CD8-positive, alpha-beta T cell (primary cell): ENCODE measurements at regions of chr1 and their contacts with region 1.

Region 1: DNA sequence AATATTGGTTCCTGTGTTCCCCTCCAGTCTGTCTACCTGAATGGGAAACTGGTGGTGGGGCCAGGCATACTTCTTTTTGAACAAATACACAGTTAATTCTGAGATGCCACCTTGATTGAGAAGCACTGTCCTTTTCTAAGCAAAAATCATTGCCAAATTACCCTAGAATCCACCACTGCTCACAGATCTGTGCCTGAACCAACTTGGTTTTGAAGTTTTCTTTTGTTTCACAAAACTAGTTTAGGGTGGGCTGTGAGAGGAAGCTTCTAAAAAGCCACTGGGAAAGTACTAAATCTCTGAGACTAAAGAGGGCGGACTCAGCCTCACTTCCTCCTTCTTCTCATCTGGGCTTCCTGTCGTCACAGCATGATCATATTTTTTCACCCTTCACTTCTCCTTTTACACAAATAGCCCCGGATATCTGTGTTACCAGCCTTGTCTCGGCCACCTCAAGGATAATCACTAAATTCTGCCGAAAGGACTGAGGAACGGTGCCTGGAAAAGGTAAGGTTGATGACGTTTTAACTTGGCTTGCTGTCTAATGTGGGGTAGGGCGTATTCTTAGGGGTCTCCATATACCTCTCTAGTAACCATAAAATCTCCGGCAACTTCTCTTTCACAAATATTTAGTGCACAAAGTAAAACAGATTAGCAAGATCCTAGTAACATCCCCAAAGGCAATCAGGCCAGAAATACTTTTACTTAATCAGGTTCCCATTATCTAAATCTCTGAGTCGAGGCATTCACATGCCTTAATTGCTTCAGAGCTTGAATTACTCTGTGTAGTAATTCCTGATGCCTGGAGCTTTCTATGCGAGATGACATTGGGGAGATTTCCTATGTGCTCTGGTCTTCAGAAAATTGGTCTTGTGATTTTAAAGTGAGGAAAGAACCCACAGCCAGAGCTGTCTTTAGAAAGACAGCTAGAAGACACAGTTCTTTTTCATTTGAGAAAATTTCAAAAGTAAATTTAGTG is at the start of gene CD53:
- DNase-seq: peak in 8 of 9 experiments; percentile 39 to 92 (median 66)
- ATAC-seq: peak; percentile 70
- H3K4me3 ChIP-seq: peak within 1 kb of the TSS; percentile 83 to 86
- H3K4me3 Mint-ChIP-seq: peak within 1 kb of the TSS; percentile 96
- H3K27ac ChIP-seq: peak within 1 kb of the TSS; percentile 95 to 96
- H3K27ac Mint-ChIP-seq: peak within 1 kb of the TSS; percentile 98
- H3K4me1 ChIP-seq: peaks cover 49% of the 10 kb centered on the region
- H3K4me1 Mint-ChIP-seq: peaks cover 63% of the 10 kb centered on the region
- H3K27me3 ChIP-seq: no peaks in the 10 kb centered on the region
- H3K27me3 Mint-ChIP-seq: no peaks in the 10 kb centered on the region
- CTCF ChIP-seq: no peak
- total RNA-seq, gene CD53: 205 to 213 TPM

Region 2: GRCh38 chr1:110630839-110631663 is 242.0 kb before region 1 on chr1:
- CTCF ChIA-PET with region 1: no interaction called
- POLR2A ChIA-PET with region 1: no interaction called
- intact Hi-C with region 1: loop called (anchors 5 to 10 kb)
- DNase-seq: peak; percentile 66 to 94 (median 85)
- ATAC-seq: peak; percentile 72
- H3K4me3 ChIP-seq: peak overlapping the region; percentile 27
- H3K4me3 Mint-ChIP-seq: no peak overlapping the region
- H3K27ac ChIP-seq: peak overlapping the region; percentile 28 to 55
- H3K27ac Mint-ChIP-seq: no peak overlapping the region
- H3K4me1 ChIP-seq: peaks cover 55% of the 10 kb centered on the region
- H3K4me1 Mint-ChIP-seq: peaks cover 46% of the 10 kb centered on the region
- H3K27me3 ChIP-seq: no peaks in the 10 kb centered on the region
- H3K27me3 Mint-ChIP-seq: no peaks in the 10 kb centered on the region
- CTCF ChIP-seq: peak; percentile 70

Region 3: DNA sequence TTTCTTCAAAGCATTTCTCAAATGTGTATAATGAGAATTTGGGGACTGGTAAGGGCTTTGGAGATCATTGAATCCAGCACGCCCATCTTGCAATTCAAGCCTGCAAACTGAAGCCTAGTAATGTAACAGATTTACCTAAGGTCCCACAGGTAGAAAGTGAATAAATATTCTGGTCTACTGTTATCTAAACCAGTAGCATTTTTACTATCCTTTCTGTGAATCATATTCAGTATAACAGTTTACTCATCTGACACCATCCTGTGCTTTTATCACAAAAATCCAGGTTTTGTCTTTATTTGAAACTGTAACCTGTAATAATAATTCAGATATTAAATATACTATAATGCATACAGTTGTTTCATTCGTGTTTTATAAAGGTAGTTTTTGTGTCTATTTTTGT is 215.7 kb before region 1 on chr1:
- CTCF ChIA-PET with region 1: no interaction called
- POLR2A ChIA-PET with region 1: no interaction called
- intact Hi-C with region 1: no loop called
- DNase-seq: no peak
- ATAC-seq: no peak
- H3K4me3 ChIP-seq: no peak overlapping the region
- H3K4me3 Mint-ChIP-seq: no peak overlapping the region
- H3K27ac ChIP-seq: no peak overlapping the region
- H3K27ac Mint-ChIP-seq: peak overlapping the region; percentile 27
- H3K4me1 ChIP-seq: peaks cover 9% of the 10 kb centered on the region
- H3K4me1 Mint-ChIP-seq: peaks cover 65% of the 10 kb centered on the region
- H3K27me3 ChIP-seq: no peaks in the 10 kb centered on the region
- H3K27me3 Mint-ChIP-seq: no peaks in the 10 kb centered on the region
- CTCF ChIP-seq: no peak

Region 4: GRCh38 chr1:110714374-110714995 is 158.5 kb before region 1 on chr1:
- CTCF ChIA-PET with region 1: no interaction called
- POLR2A ChIA-PET with region 1: no interaction called
- intact Hi-C with region 1: no loop called
- DNase-seq: no peak
- ATAC-seq: no peak
- H3K4me3 ChIP-seq: no peak overlapping the region
- H3K4me3 Mint-ChIP-seq: no peak overlapping the region
- H3K27ac ChIP-seq: no peak overlapping the region
- H3K27ac Mint-ChIP-seq: no peak overlapping the region
- H3K4me1 ChIP-seq: no peaks in the 10 kb centered on the region
- H3K4me1 Mint-ChIP-seq: peaks cover 18% of the 10 kb centered on the region
- H3K27me3 ChIP-seq: no peaks in the 10 kb centered on the region
- H3K27me3 Mint-ChIP-seq: peaks cover 2% of the 10 kb centered on the region
- CTCF ChIP-seq: no peak

Region 5: GRCh38 chr1:110787328-110788071 is 85.5 kb before region 1 on chr1:
- CTCF ChIA-PET with region 1: interaction called, 9 read pairs
- POLR2A ChIA-PET with region 1: interaction called, 26 read pairs
- intact Hi-C with region 1: loop called in 1 of 2 experiments (anchors 5 kb)
- DNase-seq: peak in 8 of 9 experiments; percentile 16 to 79 (median 50)
- ATAC-seq: peak; percentile 69
- H3K4me3 ChIP-seq: peak overlapping the region; percentile 23 to 25
- H3K4me3 Mint-ChIP-seq: peak overlapping the region; percentile 71
- H3K27ac ChIP-seq: peak overlapping the region; percentile 22 to 64
- H3K27ac Mint-ChIP-seq: peak overlapping the region; percentile 82
- H3K4me1 ChIP-seq: peaks cover 58% of the 10 kb centered on the region
- H3K4me1 Mint-ChIP-seq: peaks cover 68% of the 10 kb centered on the region
- H3K27me3 ChIP-seq: no peaks in the 10 kb centered on the region
- H3K27me3 Mint-ChIP-seq: no peaks in the 10 kb centered on the region
- CTCF ChIP-seq: no peak

Region 6: DNA sequence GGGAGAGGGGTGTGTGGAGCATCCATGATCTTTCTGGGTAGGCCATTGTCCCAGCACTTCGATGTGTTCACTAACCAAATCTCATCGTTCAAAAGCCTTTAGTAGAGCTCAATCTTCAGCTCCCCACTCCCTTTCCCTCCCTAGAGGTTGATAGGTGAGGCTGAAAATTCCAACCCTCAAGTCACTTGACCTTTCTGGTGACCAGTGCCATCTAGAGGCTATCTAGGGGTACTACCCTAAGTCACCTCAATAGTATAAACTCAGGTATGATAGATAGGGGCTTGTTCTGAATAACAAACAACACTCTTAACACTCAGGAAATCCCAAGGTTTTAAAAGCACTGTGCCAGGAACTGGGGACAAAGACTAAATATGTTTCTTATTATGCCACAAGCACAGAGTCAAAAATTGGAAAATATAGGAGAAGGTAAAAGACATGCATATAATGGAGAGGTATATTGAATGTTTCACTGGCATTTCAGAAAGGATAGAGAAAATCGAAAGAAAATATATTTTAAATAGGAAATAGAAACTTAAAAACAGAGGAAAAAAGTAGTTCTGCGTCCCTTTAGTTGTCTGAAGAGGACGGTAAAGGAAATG is 43.0 kb before region 1 on chr1:
- CTCF ChIA-PET with region 1: interaction called, 4 read pairs
- POLR2A ChIA-PET with region 1: interaction called, 3 read pairs
- intact Hi-C with region 1: loop called (anchors 5 kb)
- DNase-seq: peak in 6 of 9 experiments; percentile 8 to 73 (median 28)
- ATAC-seq: peak; percentile 97
- H3K4me3 ChIP-seq: no peak overlapping the region
- H3K4me3 Mint-ChIP-seq: no peak overlapping the region
- H3K27ac ChIP-seq: no peak overlapping the region
- H3K27ac Mint-ChIP-seq: no peak overlapping the region
- H3K4me1 ChIP-seq: peaks cover 5% of the 10 kb centered on the region
- H3K4me1 Mint-ChIP-seq: peaks cover 15% of the 10 kb centered on the region
- H3K27me3 ChIP-seq: no peaks in the 10 kb centered on the region
- H3K27me3 Mint-ChIP-seq: no peaks in the 10 kb centered on the region
- CTCF ChIP-seq: peak; percentile 91

Region 7: GRCh38 chr1:110857964-110858948 is 14.8 kb before region 1 on chr1:
- CTCF ChIA-PET with region 1: no interaction called
- POLR2A ChIA-PET with region 1: interaction called, 4 read pairs
- intact Hi-C with region 1: loop called in 1 of 2 experiments (anchors 2 kb)
- DNase-seq: peak in 1 of 9 experiments; percentile 11
- ATAC-seq: no peak
- H3K4me3 ChIP-seq: no peak overlapping the region
- H3K4me3 Mint-ChIP-seq: no peak overlapping the region
- H3K27ac ChIP-seq: no peak overlapping the region
- H3K27ac Mint-ChIP-seq: no peak overlapping the region
- H3K4me1 ChIP-seq: peaks cover 4% of the 10 kb centered on the region
- H3K4me1 Mint-ChIP-seq: peaks cover 19% of the 10 kb centered on the region
- H3K27me3 ChIP-seq: no peaks in the 10 kb centered on the region
- H3K27me3 Mint-ChIP-seq: no peaks in the 10 kb centered on the region
- CTCF ChIP-seq: no peak

Region 8: DNA sequence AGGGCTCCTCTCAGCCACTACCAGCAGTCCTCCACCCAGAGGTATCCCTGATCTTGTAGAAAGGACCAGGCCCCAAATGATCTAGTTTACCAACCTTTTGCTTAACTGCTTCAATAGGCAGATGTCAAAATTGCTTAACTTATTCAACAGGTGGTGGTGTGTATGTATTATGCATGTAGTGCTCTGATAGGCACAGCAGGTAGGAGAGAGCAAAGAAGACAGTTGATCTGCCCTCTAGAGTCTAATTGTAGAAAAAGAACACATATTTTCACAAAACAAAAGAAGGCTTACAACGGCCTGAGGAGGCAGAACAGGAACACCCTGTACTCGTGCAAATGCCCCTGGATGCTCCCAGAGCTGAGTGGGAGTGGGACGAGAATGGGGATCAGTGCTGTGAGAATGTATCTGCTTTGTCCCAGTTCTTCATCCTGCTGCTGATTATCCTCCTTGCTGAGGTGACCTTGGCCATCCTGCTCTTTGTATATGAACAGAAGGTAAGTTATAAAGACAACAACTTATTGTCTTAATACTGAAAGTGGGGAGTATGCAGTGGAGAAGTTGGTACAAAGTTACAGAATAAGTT is 21.0 kb after region 1 on chr1:
- CTCF ChIA-PET with region 1: interaction called, 3 read pairs
- POLR2A ChIA-PET with region 1: interaction called, 10 read pairs
- intact Hi-C with region 1: loop called (anchors 2 kb)
- DNase-seq: peak in 1 of 9 experiments; percentile 43
- ATAC-seq: peak; percentile 46
- H3K4me3 ChIP-seq: no peak overlapping the region
- H3K4me3 Mint-ChIP-seq: peak overlapping the region; percentile 16
- H3K27ac ChIP-seq: peak overlapping the region in 1 of 2 experiments; percentile 68
- H3K27ac Mint-ChIP-seq: peak overlapping the region; percentile 89
- H3K4me1 ChIP-seq: peaks cover 85% of the 10 kb centered on the region
- H3K4me1 Mint-ChIP-seq: peaks cover 97% of the 10 kb centered on the region
- H3K27me3 ChIP-seq: no peaks in the 10 kb centered on the region
- H3K27me3 Mint-ChIP-seq: no peaks in the 10 kb centered on the region
- CTCF ChIP-seq: no peak

Region 9: DNA sequence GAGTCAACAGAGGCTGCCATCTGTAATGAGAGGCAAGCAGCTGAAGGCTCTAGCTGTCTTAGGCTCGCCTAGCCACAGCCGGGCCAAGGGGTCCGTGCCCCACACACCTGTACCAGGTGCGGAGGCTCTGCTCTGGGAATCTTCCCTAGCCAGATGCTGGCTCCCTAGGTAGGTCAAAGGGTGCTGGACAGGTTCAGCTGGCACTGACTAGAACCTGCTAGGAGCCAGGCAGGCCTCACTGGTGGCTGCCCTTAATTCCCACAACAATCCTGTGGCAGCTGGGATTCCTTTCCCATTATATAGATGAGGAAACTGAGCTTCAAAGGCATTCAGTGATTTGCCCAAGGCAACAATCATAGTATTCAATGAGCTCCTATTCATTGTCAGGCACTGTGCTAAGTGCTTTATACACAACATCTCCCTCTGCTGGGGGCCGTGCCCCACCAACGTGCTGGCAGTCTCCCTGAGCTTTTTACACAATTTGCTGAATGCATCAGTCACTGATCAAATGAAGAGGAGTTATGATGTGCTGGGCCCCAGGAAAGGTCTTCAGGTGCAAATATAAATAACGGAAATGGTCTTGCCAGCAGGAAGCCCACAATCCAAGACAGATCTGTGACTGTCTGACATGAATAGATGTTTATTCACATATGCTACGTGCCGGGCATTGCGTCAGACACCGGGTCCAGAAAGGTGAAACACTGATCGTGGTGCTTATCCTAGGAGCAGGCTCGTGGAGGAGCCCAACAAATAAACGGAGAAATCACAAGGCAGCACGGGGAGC is 940.7 kb after region 1 on chr1:
- CTCF ChIA-PET with region 1: no interaction called
- POLR2A ChIA-PET with region 1: no interaction called
- intact Hi-C with region 1: no loop called
- DNase-seq: no peak
- ATAC-seq: no peak
- H3K4me3 ChIP-seq: no peak overlapping the region
- H3K4me3 Mint-ChIP-seq: no peak overlapping the region
- H3K27ac ChIP-seq: no peak overlapping the region
- H3K27ac Mint-ChIP-seq: no peak overlapping the region
- H3K4me1 ChIP-seq: no peaks in the 10 kb centered on the region
- H3K4me1 Mint-ChIP-seq: no peaks in the 10 kb centered on the region
- H3K27me3 ChIP-seq: no peaks in the 10 kb centered on the region
- H3K27me3 Mint-ChIP-seq: peaks cover 6% of the 10 kb centered on the region
- CTCF ChIP-seq: no peak